ENCODE measurements at regions of chr5 and their contacts with region 1.

Region 1: GRCh38 chr5:136620016-136620419 is 254.7 kb upstream of the TRPC7 start:
- DNase-seq: peak; percentile 25 to 72
- H3K4me3 ChIP-seq: no peak overlapping the region
- H3K27ac ChIP-seq: peak overlapping the region; percentile 46
- H3K4me1 ChIP-seq: peaks cover 35% of the 10 kb centered on the region
- H3K27me3 ChIP-seq: no peaks in the 10 kb centered on the region
- CTCF ChIP-seq: no peak

Region 2: GRCh38 chr5:136538534-136538933 is 81.5 kb before region 1 on chr5:
- CTCF ChIA-PET with region 1: no interaction called
- POLR2A ChIA-PET with region 1: no interaction called
- intact Hi-C with region 1: no loop called
- DNase-seq: peak in 1 of 2 experiments; percentile 42
- H3K4me3 ChIP-seq: no peak overlapping the region
- H3K27ac ChIP-seq: no peak overlapping the region
- H3K4me1 ChIP-seq: no peaks in the 10 kb centered on the region
- H3K27me3 ChIP-seq: no peaks in the 10 kb centered on the region
- CTCF ChIP-seq: no peak

Region 3: GRCh38 chr5:136655429-136655828 is 35.4 kb after region 1 on chr5:
- CTCF ChIA-PET with region 1: no interaction called
- POLR2A ChIA-PET with region 1: no interaction called
- intact Hi-C with region 1: loop called (anchors 5 kb)
- DNase-seq: peak; percentile 19 to 95
- H3K4me3 ChIP-seq: no peak overlapping the region
- H3K27ac ChIP-seq: peak overlapping the region; percentile 50
- H3K4me1 ChIP-seq: peaks cover 32% of the 10 kb centered on the region
- H3K27me3 ChIP-seq: no peaks in the 10 kb centered on the region
- CTCF ChIP-seq: no peak

Region 4: DNA sequence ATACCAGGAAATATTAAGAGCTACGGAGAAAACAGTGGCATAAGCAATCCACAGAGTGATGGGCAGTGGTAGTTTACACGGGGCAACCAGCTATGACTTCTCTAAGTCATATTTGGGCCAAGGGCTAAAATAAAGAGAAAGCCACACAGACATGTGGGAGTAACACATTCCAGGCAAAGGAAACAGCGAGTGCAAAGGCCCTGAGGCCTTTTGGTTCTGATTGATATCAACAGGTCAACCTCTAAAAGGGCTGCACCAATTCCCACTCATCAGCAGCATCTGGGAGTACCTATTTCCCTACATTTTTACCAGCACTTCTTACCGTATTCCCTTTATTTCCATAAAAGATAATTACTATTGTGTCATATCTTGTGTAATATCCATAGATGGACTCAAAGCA is 705.7 kb after region 1 on chr5:
- CTCF ChIA-PET with region 1: interaction called, 13 read pairs
- POLR2A ChIA-PET with region 1: no interaction called
- intact Hi-C with region 1: no loop called
- DNase-seq: no peak
- H3K4me3 ChIP-seq: no peak overlapping the region
- H3K27ac ChIP-seq: no peak overlapping the region
- H3K4me1 ChIP-seq: no peaks in the 10 kb centered on the region
- H3K27me3 ChIP-seq: no peaks in the 10 kb centered on the region
- CTCF ChIP-seq: no peak

Measured in PC-9 (cell line).